ENCODE measurements at regions of chr3 and their contacts with region 1.

Region 1: DNA sequence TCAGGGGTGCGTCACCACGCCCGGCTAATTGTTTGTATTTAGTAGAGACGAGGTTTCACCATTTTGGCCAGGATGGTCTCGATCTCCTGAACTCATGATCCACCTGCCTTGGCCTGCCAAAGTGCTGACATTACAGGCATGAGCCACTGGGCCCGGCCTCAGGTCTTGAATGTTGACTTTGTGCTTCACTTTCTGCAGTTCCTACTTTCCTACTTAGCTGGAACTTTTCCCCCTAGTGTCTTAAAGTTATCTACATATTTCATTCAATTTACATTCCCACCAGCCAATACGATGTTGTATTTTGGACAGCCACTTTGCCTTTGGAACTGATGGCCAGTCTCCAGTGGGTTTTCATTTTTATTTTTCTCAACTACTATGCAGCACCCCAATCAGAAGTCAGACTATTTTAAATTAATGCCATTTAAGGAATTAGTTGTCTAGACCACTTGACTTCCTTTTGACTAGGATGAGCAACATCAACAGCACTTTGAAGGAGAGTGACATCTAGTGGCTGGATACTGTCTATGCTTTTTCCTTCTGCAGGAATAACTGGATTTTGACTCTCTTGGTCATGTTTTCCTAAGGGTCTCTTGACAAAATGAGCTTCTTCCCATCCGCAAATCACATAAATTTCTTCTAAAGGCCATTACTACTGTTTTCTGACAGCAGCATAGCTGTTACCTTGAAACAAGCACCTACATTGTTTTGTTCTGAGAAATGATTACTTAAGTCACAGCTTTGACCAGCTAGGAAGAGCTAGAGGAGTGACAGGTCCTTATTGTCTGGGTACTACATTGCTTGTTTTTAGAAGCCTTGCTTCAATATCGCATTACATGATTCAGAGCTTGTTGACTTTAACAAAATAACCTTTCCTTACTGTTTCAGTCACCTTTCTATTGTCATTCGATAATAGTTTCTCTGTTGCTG is 140.2 kb downstream of the ITPR1 start:
- DNase-seq: no peak
- H3K4me3 Mint-ChIP-seq: no peak overlapping the region
- H3K27ac Mint-ChIP-seq: no peak overlapping the region
- H3K4me1 Mint-ChIP-seq: peaks cover 3% of the 10 kb centered on the region
- H3K27me3 Mint-ChIP-seq: no peaks in the 10 kb centered on the region

Region 2: DNA sequence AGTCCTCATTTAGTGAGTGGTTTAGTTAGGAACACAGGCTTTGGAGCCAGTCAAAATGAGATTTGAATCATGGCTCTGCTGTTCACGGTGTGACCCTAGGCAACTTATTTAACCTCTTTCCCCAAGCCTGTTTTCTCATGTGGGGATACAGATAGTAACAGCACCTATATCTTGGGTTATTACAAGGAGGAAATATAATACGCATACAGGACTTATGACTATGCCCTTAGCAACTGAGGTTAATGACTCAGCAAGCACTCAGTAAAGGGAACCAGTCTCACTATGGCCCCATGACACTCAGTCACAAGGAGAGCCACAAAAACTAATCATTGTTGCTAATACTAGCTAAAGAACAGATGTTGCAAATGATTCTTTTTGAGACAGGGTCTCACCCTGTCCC is 212.2 kb before region 1 on chr3:
- CTCF ChIA-PET with region 1: interaction called, 3 read pairs
- intact Hi-C with region 1: loop called (anchors 5 kb)
- DNase-seq: peak; percentile 39
- H3K4me3 Mint-ChIP-seq: no peak overlapping the region
- H3K27ac Mint-ChIP-seq: no peak overlapping the region
- H3K4me1 Mint-ChIP-seq: peaks cover 19% of the 10 kb centered on the region
- H3K27me3 Mint-ChIP-seq: no peaks in the 10 kb centered on the region

Region 3: GRCh38 chr3:4512895-4513616 is 120.3 kb before region 1 on chr3:
- CTCF ChIA-PET with region 1: interaction called, 38 read pairs
- intact Hi-C with region 1: no loop called
- DNase-seq: no peak
- H3K4me3 Mint-ChIP-seq: no peak overlapping the region
- H3K27ac Mint-ChIP-seq: no peak overlapping the region
- H3K4me1 Mint-ChIP-seq: peaks cover 23% of the 10 kb centered on the region
- H3K27me3 Mint-ChIP-seq: no peaks in the 10 kb centered on the region

Region 4: DNA sequence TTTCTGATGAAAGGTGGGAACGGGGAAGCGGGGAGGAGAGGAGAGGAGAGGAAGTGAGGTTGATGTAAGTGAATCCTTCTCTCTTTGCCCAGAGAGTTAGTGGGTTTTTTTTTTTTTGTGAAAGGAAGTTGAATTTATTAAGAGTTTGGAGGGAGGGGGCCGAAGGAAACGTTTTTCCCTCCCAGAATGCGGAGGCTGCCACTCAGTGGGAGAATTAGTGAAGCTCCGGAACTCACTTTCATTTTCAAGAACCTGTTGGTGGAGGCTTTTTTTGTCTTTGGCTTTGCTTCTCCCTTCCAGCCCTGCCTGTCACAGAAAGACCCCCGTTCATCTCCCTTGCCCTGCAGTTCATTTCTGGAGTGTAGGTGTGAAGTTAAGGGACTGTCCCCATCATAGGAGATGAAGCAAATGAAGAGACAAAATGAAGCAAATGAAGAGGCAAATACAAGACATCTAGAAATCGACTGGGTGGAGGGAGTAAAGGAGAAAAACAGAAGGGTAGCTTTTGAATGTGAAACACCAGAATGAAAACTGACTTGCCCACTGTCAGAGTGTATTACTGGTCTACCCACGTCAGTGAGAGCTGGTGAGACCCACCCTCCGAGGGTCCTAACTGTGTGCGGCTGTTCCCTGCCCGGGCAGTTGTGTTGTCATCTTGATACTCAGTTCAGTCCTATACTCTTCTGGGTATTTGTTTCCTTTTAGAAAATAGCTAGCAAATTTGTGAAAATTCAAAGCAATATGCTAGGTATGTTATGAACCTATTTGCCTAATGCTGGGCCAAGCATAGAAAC is 48.7 kb before region 1 on chr3:
- CTCF ChIA-PET with region 1: interaction called, 5 read pairs
- intact Hi-C with region 1: loop called (anchors 2 kb)
- DNase-seq: peak; percentile 72
- H3K4me3 Mint-ChIP-seq: peak overlapping the region; percentile 70
- H3K27ac Mint-ChIP-seq: peak overlapping the region; percentile 83
- H3K4me1 Mint-ChIP-seq: peaks cover 61% of the 10 kb centered on the region
- H3K27me3 Mint-ChIP-seq: no peaks in the 10 kb centered on the region

Region 5: GRCh38 chr3:5078151-5078550 is 444.8 kb after region 1 on chr3:
- CTCF ChIA-PET with region 1: no interaction called
- intact Hi-C with region 1: no loop called
- DNase-seq: no peak
- H3K4me3 Mint-ChIP-seq: no peak overlapping the region
- H3K27ac Mint-ChIP-seq: no peak overlapping the region
- H3K4me1 Mint-ChIP-seq: no peaks in the 10 kb centered on the region
- H3K27me3 Mint-ChIP-seq: no peaks in the 10 kb centered on the region

Measured in activated naive CD4-positive, alpha-beta T cell treated with anti-CD3 and anti-CD28 coated beads for 36 hours (primary cell).